CD4-positive, alpha-beta memory T cell (primary cell): ENCODE measurements at regions of chr21 and their contacts with region 1.

Region 1: GRCh38 chr21:18204931-18205330 is 39.7 kb upstream of the CHODL start:
- DNase-seq: no peak
- H3K4me3 ChIP-seq: no peak overlapping the region
- H3K4me3 Mint-ChIP-seq: no peak overlapping the region
- H3K27ac ChIP-seq: no peak overlapping the region
- H3K27ac Mint-ChIP-seq: no peak overlapping the region
- H3K4me1 ChIP-seq: no peaks in the 10 kb centered on the region
- H3K4me1 Mint-ChIP-seq: no peaks in the 10 kb centered on the region
- H3K27me3 ChIP-seq: no peaks in the 10 kb centered on the region
- H3K27me3 Mint-ChIP-seq: no peaks in the 10 kb centered on the region

Region 2: DNA sequence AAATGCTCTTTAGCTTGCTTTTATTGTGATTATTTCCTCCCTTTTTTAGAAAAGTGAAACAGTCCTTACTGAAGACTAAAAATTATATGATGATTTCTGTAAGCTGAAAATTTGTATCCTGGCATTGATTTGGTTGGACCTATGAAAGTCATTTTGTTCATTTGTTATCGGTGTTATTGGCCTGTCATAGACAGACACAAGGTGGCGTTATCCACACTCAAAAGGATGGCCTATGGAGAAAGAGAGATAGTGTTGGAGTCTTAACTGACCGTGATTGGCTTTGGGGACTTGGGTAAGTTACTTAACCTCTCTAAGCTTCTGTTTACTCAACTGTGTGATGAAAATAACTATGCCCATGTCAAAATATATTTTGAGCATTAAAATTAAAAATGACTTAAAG is 163.9 kb before region 1 on chr21:
- CTCF ChIA-PET with region 1: interaction called, 10 read pairs
- POLR2A ChIA-PET with region 1: no interaction called
- intact Hi-C with region 1: no loop called
- DNase-seq: peak in 1 of 5 donors; percentile 1
- H3K4me3 ChIP-seq: no peak overlapping the region
- H3K4me3 Mint-ChIP-seq: no peak overlapping the region
- H3K27ac ChIP-seq: no peak overlapping the region
- H3K27ac Mint-ChIP-seq: no peak overlapping the region
- H3K4me1 ChIP-seq: no peaks in the 10 kb centered on the region
- H3K4me1 Mint-ChIP-seq: no peaks in the 10 kb centered on the region
- H3K27me3 ChIP-seq: no peaks in the 10 kb centered on the region
- H3K27me3 Mint-ChIP-seq: peaks cover 0 to 2% of the 10 kb centered on the region in 2 donors

Region 3: DNA sequence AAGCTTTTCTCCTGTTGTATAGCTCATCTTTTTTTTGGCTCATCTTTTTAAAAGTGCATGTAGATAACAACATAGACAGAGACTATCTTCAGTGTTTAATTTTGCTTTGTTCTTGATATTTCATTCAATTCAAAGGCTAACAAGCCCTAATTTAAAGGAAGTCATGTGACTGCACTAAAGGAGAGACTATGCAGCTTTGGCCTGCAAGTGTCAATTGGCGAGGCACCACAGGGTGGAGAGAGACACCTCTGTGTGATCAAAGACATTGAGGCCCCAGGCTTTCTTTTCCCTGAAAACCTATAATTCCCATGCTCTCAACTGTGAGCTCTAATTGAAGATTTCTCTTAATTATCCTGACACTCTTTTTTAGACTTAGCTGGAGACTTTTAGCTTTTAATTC is 93.3 kb after region 1 on chr21:
- CTCF ChIA-PET with region 1: no interaction called
- POLR2A ChIA-PET with region 1: no interaction called
- intact Hi-C with region 1: no loop called
- DNase-seq: no peak
- H3K4me3 ChIP-seq: no peak overlapping the region
- H3K4me3 Mint-ChIP-seq: no peak overlapping the region
- H3K27ac ChIP-seq: no peak overlapping the region
- H3K27ac Mint-ChIP-seq: no peak overlapping the region
- H3K4me1 ChIP-seq: no peaks in the 10 kb centered on the region
- H3K4me1 Mint-ChIP-seq: peaks cover 0 to 6% (median 4%) of the 10 kb centered on the region in 4 donors
- H3K27me3 ChIP-seq: no peaks in the 10 kb centered on the region
- H3K27me3 Mint-ChIP-seq: no peaks in the 10 kb centered on the region